ENCODE measurements at regions of chr6 and their contacts with region 1.

Region 1: GRCh38 chr6:143842902-143843676 is at the start of gene LTV1:
- DNase-seq: peak; percentile 99
- total RNA-seq, gene LTV1: 16.8 to 20.8 TPM

Region 2: DNA sequence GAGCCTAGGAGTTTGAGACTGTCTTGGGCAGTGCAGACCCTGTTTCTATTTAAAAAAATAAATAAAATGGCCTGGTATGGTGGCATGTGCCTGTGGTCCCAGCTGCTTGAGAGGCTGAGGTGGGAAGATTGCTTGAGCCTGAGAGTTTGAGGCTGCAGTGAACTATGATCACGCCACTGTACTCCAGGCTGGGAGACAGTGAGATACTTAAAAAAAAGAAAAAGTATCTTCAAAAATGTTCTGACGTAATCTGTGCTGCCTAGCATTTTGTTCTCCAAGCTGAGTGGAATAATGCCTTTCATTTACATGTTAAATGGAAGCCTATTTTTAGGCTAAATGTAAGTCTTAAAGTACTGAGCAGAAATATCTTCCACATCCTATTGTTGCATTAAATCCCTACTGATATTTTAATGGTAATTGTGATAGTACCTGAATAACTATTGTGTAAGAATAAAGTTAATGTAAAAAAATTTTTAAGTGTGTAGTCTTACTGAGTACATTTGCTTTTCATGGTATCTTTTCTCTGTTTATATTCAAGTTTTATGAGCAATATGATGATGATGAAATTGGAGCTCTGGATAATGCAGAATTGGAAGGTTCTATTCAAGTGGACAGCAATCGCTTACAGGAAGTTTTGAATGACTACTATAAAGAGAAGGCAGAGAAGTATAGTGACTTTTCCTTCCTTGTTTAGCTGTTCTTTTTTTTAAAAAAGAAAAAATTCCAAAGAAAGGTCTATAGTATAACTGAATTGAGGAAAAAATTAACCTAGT is 17.0 kb after region 1 on chr6:
- intact Hi-C with region 1: loop called in 1 of 2 experiments (anchors 1 kb)
- DNase-seq: no peak

Measured in posterior vena cava (tissue), 2 donors.